ENCODE measurements at regions of chr10 and their contacts with region 1.

Region 1: GRCh38 chr10:94320285-94320914 is 42.3 kb downstream of the NOC3L start:
- DNase-seq: peak; percentile 86

Region 2: DNA sequence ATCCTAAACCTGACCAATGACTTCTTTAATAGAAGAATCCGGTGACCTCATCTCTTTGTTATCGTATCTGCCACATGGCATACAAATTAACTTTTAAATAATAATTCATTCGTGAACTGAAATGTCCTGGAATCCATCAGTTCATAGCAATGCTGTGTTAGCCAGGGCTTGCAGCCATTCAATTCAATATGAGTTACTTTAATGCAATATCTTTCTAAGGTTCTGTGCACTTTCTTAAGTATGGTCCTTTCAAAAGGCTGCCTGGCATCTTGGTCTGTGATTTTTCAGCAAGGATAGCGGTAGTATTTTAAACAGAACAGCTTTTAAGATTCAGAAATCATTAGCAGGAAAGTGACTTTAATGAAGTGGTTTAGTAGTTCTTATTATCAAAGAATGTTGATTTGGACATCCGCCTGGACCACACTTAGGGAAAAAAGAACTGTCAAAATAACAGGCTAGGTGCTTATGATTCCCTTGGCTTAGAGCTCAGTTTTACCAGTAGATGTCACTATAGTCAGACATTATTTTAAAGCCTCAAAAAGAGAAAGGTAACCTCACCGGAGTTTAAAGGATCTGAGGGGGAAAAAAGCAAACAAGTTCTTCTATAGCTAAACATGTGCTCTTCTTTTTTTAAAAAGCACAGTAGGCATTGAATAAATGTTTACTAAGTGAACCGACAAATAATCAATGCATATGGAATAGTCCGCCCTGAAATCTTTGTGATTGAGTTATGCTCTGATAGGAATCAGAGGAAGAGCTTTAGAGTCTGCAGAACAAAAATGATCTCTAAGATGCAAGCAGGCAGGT is 403.9 kb before region 1 on chr10:
- intact Hi-C with region 1: loop called in 1 of 2 experiments (anchors 5 kb)
- DNase-seq: no peak

Region 3: DNA sequence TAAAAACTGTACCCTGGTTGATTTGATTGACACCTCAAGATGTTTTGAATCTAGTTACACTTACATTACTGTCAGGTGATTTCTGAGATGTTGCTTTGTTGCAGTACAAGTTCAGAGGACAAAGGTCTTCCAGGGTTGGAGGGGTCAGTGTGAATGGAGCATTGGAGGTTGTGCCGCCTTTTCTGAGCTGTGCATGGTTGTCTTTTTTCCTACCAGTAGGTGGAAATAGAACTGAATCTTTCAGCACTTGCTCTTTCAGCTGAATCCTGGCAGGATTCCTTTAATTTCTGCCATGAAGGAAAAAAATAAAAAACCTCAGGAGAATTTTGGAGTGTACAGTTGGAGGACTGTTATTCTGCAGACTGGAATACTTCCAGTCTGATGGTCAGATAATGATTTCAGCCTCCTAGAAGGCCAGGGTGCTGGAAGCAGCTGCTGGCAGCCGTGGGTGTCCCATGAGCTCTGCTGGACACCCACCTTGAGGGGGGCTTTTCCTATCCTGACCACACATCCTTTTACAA is 244.0 kb before region 1 on chr10:
- intact Hi-C with region 1: loop called in 1 of 2 experiments (anchors 5 kb)
- DNase-seq: no peak

Region 4: GRCh38 chr10:94344522-94345122 is 24.2 kb after region 1 on chr10:
- intact Hi-C with region 1: no loop called
- DNase-seq: no peak